ENCODE measurements at regions of chr11 and their contacts with region 1.

Region 1: DNA sequence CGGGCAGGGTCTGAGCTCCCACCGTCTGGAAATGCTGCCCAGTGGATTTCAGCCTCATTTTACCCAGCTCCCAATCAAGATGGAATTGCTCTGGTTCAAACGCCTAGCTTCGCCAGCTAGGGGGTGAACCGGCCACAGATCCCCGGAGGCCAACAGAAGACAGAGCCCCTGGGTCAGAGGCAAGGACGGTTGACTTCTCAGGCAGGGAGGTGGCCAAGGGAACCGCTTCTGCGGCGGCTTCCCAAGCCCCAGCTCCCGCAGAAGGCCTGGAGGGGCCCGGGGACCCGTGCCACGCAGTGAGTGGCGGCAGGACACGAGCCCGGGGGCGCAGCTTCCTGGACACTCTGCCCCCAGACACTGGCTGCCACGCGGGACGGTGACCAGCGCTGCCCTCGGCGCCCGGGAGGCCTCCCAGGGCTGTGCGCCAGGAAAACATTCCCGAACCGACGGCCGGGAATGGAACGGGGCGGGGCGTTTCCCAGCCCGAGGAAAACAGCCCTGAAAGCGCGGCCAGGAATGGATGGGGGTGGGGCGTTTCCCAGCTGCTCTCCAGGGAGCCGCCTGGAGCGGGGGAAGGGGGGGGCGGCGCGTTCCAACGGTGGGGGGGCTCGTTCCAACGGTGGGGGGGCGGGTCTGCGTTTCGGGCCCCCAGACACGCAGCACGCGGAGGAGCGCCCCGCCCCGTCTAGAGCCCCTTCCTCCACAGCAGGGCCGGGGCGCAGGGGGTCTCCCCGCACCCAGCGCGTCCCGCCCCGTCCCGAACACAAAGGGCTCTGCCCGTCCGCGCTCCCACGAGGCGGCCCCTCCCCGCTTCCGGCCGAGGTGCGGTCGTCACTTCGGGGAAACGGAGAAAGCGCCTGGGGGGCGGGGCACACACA is 13.5 kb upstream of the B4GALNT4 start:
- DNase-seq: peak; percentile 89
- H3K4me3 ChIP-seq: peak overlapping the region; percentile 43
- H3K27ac ChIP-seq: peak overlapping the region; percentile 97
- H3K4me1 ChIP-seq: peaks cover 10% of the 10 kb centered on the region
- H3K27me3 ChIP-seq: no peaks in the 10 kb centered on the region
- CTCF ChIP-seq: no peak

Region 2: DNA sequence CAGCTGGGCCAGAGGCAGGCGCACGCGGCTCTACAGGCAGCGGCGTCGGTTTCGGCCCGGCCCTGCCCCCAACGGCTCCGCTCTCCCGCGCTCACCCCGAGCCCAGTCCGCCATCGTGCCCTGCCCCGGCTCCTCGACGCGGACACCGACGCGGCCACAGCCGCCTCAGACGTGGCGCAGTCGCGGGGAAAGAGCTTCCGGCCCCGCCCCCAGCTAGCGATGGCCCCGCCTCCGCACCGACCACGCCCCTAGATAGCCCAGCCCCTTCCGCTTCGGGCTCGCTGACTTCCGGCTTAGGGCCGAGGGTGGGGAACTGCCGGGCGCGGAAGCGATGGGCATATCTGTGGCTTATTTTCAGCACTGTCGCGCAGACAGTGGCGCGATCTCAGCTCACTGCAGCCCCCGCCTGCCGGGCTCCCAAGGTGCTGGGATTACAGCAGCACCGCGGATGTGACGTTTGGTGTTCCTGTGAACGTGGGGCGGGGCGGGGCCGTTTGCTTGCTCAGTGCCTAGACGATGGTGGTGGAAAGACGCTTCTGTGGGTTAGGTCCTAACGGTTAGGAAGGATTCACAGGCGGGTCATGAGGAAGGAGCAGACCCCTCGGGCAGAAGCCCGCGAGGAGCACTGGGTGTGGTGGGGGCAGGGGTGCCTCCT is 148.5 kb before region 1 on chr11 and contains the starts of genes BET1L and RIC8A:
- CTCF ChIA-PET with region 1: no interaction called
- POLR2A ChIA-PET with region 1: no interaction called
- intact Hi-C with region 1: loop called (anchors 5 kb)
- DNase-seq: peak; percentile 98
- H3K4me3 ChIP-seq: peak within 1 kb of the TSS; percentile 69
- H3K27ac ChIP-seq: peak within 1 kb of the TSS; percentile 98
- H3K4me1 ChIP-seq: peaks cover 13% of the 10 kb centered on the region
- H3K27me3 ChIP-seq: no peaks in the 10 kb centered on the region
- CTCF ChIP-seq: no peak
- total RNA-seq, gene BET1L: 22.2 and 26.2 TPM in 2 replicates
- total RNA-seq, gene RIC8A: 78.2 and 88.2 TPM in 2 replicates

Region 3: GRCh38 chr11:250740-251299 is 105.0 kb before region 1 on chr11:
- CTCF ChIA-PET with region 1: no interaction called
- POLR2A ChIA-PET with region 1: no interaction called
- intact Hi-C with region 1: loop called (anchors 10 kb)
- DNase-seq: peak; percentile 62
- H3K4me3 ChIP-seq: no peak overlapping the region
- H3K27ac ChIP-seq: no peak overlapping the region
- H3K4me1 ChIP-seq: no peaks in the 10 kb centered on the region
- H3K27me3 ChIP-seq: no peaks in the 10 kb centered on the region
- CTCF ChIP-seq: peak; percentile 75

Region 4: GRCh38 chr11:304915-305843 is 50.6 kb before region 1 on chr11:
- CTCF ChIA-PET with region 1: interaction called, 8 read pairs
- POLR2A ChIA-PET with region 1: no interaction called
- intact Hi-C with region 1: loop called (anchors 10 kb)
- DNase-seq: peak; percentile 64
- H3K4me3 ChIP-seq: no peak overlapping the region
- H3K27ac ChIP-seq: no peak overlapping the region
- H3K4me1 ChIP-seq: peaks cover 16% of the 10 kb centered on the region
- H3K27me3 ChIP-seq: no peaks in the 10 kb centered on the region
- CTCF ChIP-seq: peak; percentile 73

Region 5: GRCh38 chr11:369336-370018 is 13.7 kb after region 1 on chr11 and contains the start of gene B4GALNT4:
- CTCF ChIA-PET with region 1: no interaction called
- POLR2A ChIA-PET with region 1: no interaction called
- intact Hi-C with region 1: no loop called
- DNase-seq: peak; percentile 25
- H3K4me3 ChIP-seq: peak within 1 kb of the TSS; percentile 44
- H3K27ac ChIP-seq: no peak within 1 kb of the TSS
- H3K4me1 ChIP-seq: peaks cover 9% of the 10 kb centered on the region
- H3K27me3 ChIP-seq: no peaks in the 10 kb centered on the region
- CTCF ChIP-seq: no peak
- total RNA-seq, gene B4GALNT4: 19.0 and 28.9 TPM in 2 replicates

Region 6: GRCh38 chr11:406978-407739 is 51.3 kb after region 1 on chr11:
- CTCF ChIA-PET with region 1: no interaction called
- POLR2A ChIA-PET with region 1: no interaction called
- intact Hi-C with region 1: no loop called
- DNase-seq: peak; percentile 76
- H3K4me3 ChIP-seq: peak overlapping the region; percentile 58
- H3K27ac ChIP-seq: no peak overlapping the region
- H3K4me1 ChIP-seq: peaks cover 7% of the 10 kb centered on the region
- H3K27me3 ChIP-seq: no peaks in the 10 kb centered on the region
- CTCF ChIP-seq: no peak

Region 7: GRCh38 chr11:548700-549603 is 193.1 kb after region 1 on chr11:
- CTCF ChIA-PET with region 1: no interaction called
- POLR2A ChIA-PET with region 1: no interaction called
- intact Hi-C with region 1: no loop called
- DNase-seq: no peak
- H3K4me3 ChIP-seq: no peak overlapping the region
- H3K27ac ChIP-seq: no peak overlapping the region
- H3K4me1 ChIP-seq: no peaks in the 10 kb centered on the region
- H3K27me3 ChIP-seq: no peaks in the 10 kb centered on the region
- CTCF ChIP-seq: no peak

Measured in A673 (cell line).